PC-9 (cell line): ENCODE measurements at regions of chrX and their contacts with region 1.

Region 1: DNA sequence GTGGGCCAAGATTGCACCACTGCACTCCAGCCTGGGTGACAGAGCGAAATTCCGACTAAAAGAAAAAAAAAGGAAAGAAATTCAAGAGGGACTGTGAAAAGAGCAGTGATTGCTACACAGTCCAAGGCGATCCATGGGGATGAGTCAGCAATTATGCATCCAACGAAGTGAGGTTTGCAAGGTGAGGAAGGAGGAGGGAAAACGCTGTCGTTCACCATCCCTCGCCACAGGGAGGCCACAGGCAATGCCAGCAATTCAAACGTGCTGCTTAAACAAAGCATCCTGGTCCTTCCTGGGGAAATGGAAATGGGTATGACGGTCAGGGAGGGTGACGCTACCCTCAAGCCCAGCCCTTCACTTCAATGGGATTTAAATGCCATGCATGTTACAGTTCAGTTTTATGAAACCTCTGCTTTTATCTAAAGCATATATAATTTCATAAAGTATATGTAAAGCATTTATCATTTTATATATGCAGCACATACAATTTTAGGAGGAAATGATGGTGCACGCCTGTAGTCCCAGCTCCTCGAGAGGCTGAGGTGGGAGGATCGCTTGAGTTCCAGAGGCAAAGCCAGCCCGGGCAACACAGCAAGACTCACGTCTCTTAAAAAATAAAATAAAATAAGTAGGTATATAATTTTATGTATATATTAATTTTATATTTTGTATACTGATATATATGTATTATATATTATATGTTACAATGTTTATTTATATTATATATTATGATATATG is 108.7 kb downstream of the DHRSX start:
- DNase-seq: peak; percentile 78 to 94
- H3K4me3 ChIP-seq: no peak overlapping the region
- H3K27ac ChIP-seq: peak overlapping the region; percentile 78
- H3K4me1 ChIP-seq: peaks cover 24% of the 10 kb centered on the region
- H3K27me3 ChIP-seq: no peaks in the 10 kb centered on the region
- CTCF ChIP-seq: no peak; the same call in 1 of the 2 replicates

Region 2: DNA sequence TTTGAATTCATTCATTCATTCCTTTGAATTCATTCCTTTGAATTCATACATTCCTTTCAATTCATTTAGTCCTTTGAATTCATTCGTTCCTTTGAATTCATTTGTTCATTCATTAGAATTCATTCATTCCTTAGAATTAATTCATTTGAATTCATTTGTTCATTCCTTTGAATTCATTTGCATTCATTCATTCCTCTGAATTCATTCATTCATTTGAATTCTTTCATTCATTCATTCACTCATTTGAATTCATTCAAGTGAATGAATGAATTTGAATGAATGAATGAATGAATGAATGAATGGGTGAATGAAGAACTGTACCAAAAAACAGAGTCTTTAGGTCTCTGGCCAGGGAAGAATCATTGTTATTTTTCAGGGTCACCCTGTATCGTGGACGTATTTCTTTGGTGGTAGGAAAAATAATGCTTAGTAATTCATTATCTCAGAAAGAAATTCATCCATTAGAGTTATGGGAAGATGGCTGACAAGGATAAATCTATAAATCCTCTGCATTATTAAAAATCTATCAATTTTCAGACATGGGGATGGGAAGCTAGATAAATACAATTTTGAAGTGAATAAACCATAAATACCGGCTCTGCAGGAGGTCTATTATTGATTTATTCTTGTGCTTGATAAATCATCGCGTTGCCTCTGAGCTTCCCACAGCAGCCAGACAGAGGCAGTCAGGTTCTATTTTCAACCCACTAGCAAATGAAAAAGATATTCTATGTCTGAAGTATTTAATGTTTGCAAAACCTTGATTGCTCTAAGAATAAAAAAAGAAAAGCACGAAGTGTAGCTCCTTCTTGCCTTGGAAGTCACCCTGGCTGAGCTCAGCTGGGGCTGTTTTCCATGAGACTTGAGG is 107.7 kb before region 1 on chrX:
- CTCF ChIA-PET with region 1: no interaction called
- POLR2A ChIA-PET with region 1: no interaction called
- intact Hi-C with region 1: no loop called
- DNase-seq: no peak
- H3K4me3 ChIP-seq: no peak overlapping the region
- H3K27ac ChIP-seq: no peak overlapping the region
- H3K4me1 ChIP-seq: no peaks in the 10 kb centered on the region
- H3K27me3 ChIP-seq: no peaks in the 10 kb centered on the region
- CTCF ChIP-seq: no peak

Region 3: DNA sequence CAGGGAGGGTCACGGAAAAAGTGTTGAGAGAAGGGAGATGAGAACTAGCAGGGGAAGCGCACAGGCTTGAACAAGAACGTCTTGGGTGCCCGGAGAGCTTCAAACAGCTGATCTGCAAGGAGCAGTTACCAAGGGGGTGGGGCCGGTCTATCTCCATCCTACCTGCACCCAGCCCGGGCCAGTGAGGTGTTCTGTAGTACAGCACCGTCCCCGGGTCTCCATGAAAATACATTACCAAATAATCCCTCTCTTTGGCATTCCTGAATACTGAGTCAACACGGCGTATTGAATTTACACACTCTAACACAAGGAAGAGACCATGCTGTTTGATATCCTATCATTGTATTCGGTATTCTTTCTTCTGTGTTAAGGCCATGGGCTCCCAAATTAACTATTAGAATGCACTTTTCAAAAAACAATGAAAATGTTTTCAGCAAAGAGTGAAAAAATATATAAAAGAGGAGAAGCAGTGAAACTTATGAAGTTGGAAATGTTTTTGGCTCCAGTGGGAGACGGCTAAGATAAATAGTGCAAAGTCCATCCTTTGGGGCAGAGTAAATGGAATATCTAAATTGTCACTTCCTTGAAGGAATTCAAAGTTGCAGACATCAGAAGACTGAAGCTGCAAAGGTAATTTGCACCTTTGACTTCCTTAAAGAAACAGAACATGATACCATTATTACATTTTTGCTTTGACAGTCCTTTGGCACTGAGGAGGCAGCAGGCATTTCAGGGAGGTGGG is 18.4 kb after region 1 on chrX:
- CTCF ChIA-PET with region 1: no interaction called
- POLR2A ChIA-PET with region 1: no interaction called
- intact Hi-C with region 1: no loop called
- DNase-seq: no peak
- H3K4me3 ChIP-seq: no peak overlapping the region
- H3K27ac ChIP-seq: no peak overlapping the region
- H3K4me1 ChIP-seq: no peaks in the 10 kb centered on the region
- H3K27me3 ChIP-seq: no peaks in the 10 kb centered on the region
- CTCF ChIP-seq: no peak

Region 4: GRCh38 chrX:2423293-2423692 is 31.3 kb after region 1 on chrX:
- CTCF ChIA-PET with region 1: no interaction called
- POLR2A ChIA-PET with region 1: no interaction called
- intact Hi-C with region 1: no loop called
- DNase-seq: no peak
- H3K4me3 ChIP-seq: no peak overlapping the region
- H3K27ac ChIP-seq: no peak overlapping the region
- H3K4me1 ChIP-seq: no peaks in the 10 kb centered on the region
- H3K27me3 ChIP-seq: no peaks in the 10 kb centered on the region
- CTCF ChIP-seq: no peak

Region 5: GRCh38 chrX:2595258-2595657 is 203.2 kb after region 1 on chrX:
- CTCF ChIA-PET with region 1: no interaction called
- POLR2A ChIA-PET with region 1: no interaction called
- intact Hi-C with region 1: loop called (anchors 10 kb)
- DNase-seq: no peak
- H3K4me3 ChIP-seq: no peak overlapping the region
- H3K27ac ChIP-seq: no peak overlapping the region
- H3K4me1 ChIP-seq: peaks cover 29% of the 10 kb centered on the region
- H3K27me3 ChIP-seq: no peaks in the 10 kb centered on the region
- CTCF ChIP-seq: no peak